Activated CD8-positive, alpha-beta T cell treated with anti-CD3 and anti-CD28 coated beads, Interleukin-2, amount 10 ng/mL, durations not matched to agents 7 days and 5 days (primary cell): ENCODE measurements at regions of chr2 and their contacts with region 1.

Region 1: GRCh38 chr2:44560352-44560751 is 198.6 kb downstream of the CAMKMT start:
- DNase-seq: no peak
- ATAC-seq: no peak
- H3K4me3 Mint-ChIP-seq: no peak overlapping the region
- H3K27ac Mint-ChIP-seq: no peak overlapping the region
- H3K4me1 Mint-ChIP-seq: no peaks in the 10 kb centered on the region
- H3K27me3 Mint-ChIP-seq: no peaks in the 10 kb centered on the region

Region 2: DNA sequence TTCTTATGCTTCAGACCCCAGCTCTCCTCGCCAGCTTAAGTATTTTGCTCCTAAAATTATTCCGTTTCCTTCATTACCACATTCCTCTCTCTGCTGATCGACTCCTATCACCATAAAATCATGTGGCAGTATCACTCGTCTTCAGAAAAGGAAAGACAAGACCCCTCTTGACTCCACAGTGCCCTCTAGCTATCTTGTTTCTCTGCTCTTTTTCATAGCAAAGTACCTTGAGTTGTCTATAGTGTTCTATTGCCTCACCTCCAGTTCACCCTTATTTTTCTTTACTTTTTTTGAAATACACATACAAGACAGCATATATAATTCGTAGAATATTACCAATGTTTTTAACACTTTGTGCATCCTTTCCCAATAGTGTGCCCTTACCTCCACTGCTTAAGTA is 108.0 kb after region 1 on chr2:
- CTCF ChIA-PET with region 1: interaction called, 14 read pairs
- POLR2A ChIA-PET with region 1: interaction called, 4 read pairs
- DNase-seq: no peak
- ATAC-seq: no peak
- H3K4me3 Mint-ChIP-seq: no peak overlapping the region
- H3K27ac Mint-ChIP-seq: no peak overlapping the region
- H3K4me1 Mint-ChIP-seq: no peaks in the 10 kb centered on the region
- H3K27me3 Mint-ChIP-seq: no peaks in the 10 kb centered on the region